ENCODE measurements at regions of chr6 and their contacts with region 1.

Region 1: DNA sequence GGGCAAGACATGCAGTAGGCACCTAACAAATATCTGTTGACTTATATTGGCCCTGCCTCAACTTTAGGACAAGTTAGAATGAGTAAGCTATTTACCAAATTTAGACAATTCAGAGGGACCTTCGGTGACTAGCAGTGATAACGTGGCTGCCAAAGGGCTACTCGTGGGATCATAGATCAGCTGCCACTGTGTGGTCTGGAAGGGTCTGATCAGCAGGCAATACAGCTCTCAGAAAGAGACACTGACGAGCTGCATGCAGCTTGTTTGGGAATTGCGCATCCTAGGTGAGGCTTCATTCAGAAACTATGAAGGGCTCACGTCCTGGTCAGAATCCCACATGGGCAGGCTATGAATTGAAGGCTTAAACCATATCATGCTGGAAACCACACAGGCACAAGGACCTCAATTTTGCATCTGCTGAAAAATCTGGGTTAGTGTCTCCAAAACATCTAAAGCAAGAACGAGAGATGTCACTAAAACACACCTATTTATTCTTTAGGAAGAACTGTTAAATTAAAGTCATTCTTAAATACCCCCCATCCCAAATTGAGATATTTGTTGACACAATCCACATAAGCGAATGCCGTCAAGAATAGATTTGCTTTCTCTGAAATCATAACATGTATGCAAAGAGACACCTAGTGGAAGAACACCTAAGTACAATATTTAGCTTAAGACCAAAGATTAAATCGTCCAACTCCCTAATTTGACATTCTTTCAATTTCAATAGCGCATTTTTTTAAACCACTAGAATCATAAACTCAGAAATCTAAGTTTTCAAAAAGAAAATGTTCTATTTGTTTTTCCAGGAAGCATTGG is 79.6 kb downstream of the IPCEF1 start:
- DNase-seq: no peak
- ATAC-seq: peak; percentile 68
- H3K4me3 Mint-ChIP-seq: peak overlapping the region; percentile 60
- H3K27ac Mint-ChIP-seq: peak overlapping the region; percentile 31
- H3K4me1 Mint-ChIP-seq: peaks cover 35% of the 10 kb centered on the region
- H3K27me3 Mint-ChIP-seq: no peaks in the 10 kb centered on the region

Region 2: DNA sequence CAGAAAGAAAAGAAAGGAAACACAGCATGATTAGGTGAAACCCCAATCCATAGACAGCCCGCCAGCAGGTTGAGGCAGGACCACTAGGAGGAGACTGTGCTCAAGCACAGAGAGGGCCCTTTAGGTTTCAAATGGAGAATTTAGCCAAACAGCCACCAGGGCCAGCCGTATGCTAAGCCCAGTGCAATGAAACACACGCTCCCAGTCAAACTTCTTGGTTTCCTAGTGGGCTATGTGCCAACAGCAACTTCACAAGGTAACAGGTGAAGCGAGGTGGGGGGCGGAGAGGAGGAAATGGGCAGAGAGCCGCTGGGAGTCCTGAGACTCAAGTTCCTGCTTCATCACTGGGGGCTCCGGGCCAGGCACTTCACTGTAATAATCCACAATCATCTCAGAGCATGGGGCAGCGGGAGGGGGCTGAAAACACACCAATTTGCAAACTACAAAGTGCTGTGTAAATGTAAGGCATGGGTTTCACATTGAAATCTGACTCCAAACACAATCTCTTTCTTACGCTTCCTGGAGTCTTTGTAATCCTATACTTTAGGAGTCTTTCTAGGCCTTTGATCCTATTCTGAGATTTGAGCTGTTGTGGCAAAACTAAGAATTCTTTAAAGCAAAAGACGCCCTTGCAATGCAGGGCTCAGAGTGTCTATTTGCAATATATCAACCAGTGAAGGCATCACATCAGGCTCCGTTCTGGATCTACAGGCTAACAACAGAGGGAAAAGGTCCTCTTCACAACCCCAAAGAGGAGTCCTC is 120.7 kb before region 1 on chr6:
- CTCF ChIA-PET with region 1: interaction called, 112 read pairs
- POLR2A ChIA-PET with region 1: interaction called, 4 read pairs
- DNase-seq: peak; percentile 79
- ATAC-seq: peak; percentile 96
- H3K4me3 Mint-ChIP-seq: peak overlapping the region; percentile 64
- H3K27ac Mint-ChIP-seq: peak overlapping the region; percentile 88
- H3K4me1 Mint-ChIP-seq: peaks cover 33% of the 10 kb centered on the region
- H3K27me3 Mint-ChIP-seq: no peaks in the 10 kb centered on the region

Region 3: DNA sequence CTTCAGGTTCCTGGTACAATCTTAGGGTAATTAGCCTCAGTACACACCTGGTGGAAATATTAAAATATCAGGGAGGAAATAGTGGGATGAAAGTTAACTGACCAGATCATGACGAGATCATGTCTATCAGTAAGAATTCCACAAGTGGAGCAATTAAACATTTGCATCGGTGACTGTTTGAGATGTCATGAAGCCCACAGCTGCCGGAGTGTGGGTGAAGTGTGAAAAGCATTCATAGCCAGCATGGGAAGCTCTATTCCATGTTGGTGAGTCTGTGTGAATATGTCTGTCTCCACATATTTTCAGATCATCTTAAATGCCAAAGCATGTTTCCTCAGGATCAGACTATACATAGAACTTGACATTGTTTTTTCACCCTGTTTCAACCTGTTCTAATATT is 63.2 kb before region 1 on chr6:
- CTCF ChIA-PET with region 1: interaction called, 10 read pairs
- POLR2A ChIA-PET with region 1: no interaction called
- DNase-seq: no peak
- ATAC-seq: no peak
- H3K4me3 Mint-ChIP-seq: no peak overlapping the region
- H3K27ac Mint-ChIP-seq: no peak overlapping the region
- H3K4me1 Mint-ChIP-seq: peaks cover 10% of the 10 kb centered on the region
- H3K27me3 Mint-ChIP-seq: no peaks in the 10 kb centered on the region

Region 4: GRCh38 chr6:154229786-154230185 is 47.2 kb before region 1 on chr6:
- CTCF ChIA-PET with region 1: interaction called, 72 read pairs
- POLR2A ChIA-PET with region 1: no interaction called
- DNase-seq: peak; percentile 66
- ATAC-seq: peak; percentile 81
- H3K4me3 Mint-ChIP-seq: peak overlapping the region; percentile 76
- H3K27ac Mint-ChIP-seq: peak overlapping the region; percentile 92
- H3K4me1 Mint-ChIP-seq: peaks cover 64% of the 10 kb centered on the region
- H3K27me3 Mint-ChIP-seq: no peaks in the 10 kb centered on the region

Region 5: DNA sequence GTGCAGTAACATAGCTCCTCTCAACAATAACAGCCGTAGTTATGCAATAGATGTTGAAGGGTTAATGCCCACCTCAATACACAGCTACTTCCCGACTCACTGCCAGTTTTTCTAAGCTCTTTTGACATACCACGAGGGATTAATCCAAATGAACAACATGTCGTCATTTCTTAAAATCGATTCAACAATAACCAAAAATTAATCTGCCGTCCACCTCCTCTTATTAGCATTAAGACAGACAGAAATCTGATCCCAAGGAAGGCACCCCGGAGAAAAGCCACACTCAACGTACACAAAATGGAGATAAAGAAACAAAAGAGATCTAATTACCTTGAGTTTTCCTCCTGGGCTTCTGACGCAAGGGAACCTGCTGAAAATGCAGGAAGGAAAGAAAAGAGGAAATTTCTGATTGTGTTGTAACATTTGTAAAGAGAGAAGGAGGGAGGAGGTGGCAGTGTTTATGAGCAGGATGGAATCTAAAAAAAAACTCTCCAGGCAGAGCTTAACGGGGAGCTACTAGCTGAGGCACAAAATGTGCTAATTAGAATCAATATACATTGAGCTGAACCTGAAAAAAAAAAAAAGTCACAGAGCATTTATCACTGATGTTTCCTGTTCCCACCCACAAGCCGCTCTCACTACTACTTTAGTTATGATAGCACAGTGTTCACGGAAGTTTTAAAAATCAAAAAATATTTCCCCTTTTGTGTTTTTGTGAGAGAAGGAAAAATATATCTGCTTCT is 29.7 kb before region 1 on chr6:
- CTCF ChIA-PET with region 1: interaction called, 59 read pairs
- POLR2A ChIA-PET with region 1: interaction called, 5 read pairs
- DNase-seq: peak; percentile 62
- ATAC-seq: peak; percentile 62
- H3K4me3 Mint-ChIP-seq: peak overlapping the region; percentile 85
- H3K27ac Mint-ChIP-seq: peak overlapping the region; percentile 90
- H3K4me1 Mint-ChIP-seq: peaks cover 82% of the 10 kb centered on the region
- H3K27me3 Mint-ChIP-seq: no peaks in the 10 kb centered on the region

Region 6: GRCh38 chr6:154258064-154258757 is 18.8 kb before region 1 on chr6:
- CTCF ChIA-PET with region 1: interaction called, 30 read pairs
- POLR2A ChIA-PET with region 1: interaction called, 3 read pairs
- DNase-seq: no peak
- ATAC-seq: peak; percentile 65
- H3K4me3 Mint-ChIP-seq: no peak overlapping the region
- H3K27ac Mint-ChIP-seq: peak overlapping the region; percentile 0
- H3K4me1 Mint-ChIP-seq: peaks cover 24% of the 10 kb centered on the region
- H3K27me3 Mint-ChIP-seq: no peaks in the 10 kb centered on the region

Measured in activated CD8-positive, alpha-beta T cell treated with anti-CD3 and anti-CD28 coated beads, Interleukin-2, amount 10 ng/mL, durations not matched to agents 7 days and 5 days (primary cell).